Naive thymus-derived CD4-positive, alpha-beta T cell (primary cell): ENCODE measurements at regions of chr11 and their contacts with region 1.

Region 1: GRCh38 chr11:11866203-11866602 is 24.4 kb downstream of the USP47 start:
- DNase-seq: no peak
- ATAC-seq: no peak
- H3K4me3 ChIP-seq: no peak overlapping the region
- H3K4me3 Mint-ChIP-seq: peak overlapping the region in 6 of 10 donors; percentile 2 to 69 (median 32)
- H3K27ac ChIP-seq: no peak overlapping the region
- H3K27ac Mint-ChIP-seq: peak overlapping the region in 2 of 9 donors; percentile 11 to 12
- H3K4me1 ChIP-seq: peaks cover 23 to 30% of the 10 kb centered on the region in 2 donors
- H3K4me1 Mint-ChIP-seq: peaks cover 38 to 87% (median 77%) of the 10 kb centered on the region in 7 donors
- H3K27me3 ChIP-seq: no peaks in the 10 kb centered on the region
- H3K27me3 Mint-ChIP-seq: no peaks in the 10 kb centered on the region

Region 2: DNA sequence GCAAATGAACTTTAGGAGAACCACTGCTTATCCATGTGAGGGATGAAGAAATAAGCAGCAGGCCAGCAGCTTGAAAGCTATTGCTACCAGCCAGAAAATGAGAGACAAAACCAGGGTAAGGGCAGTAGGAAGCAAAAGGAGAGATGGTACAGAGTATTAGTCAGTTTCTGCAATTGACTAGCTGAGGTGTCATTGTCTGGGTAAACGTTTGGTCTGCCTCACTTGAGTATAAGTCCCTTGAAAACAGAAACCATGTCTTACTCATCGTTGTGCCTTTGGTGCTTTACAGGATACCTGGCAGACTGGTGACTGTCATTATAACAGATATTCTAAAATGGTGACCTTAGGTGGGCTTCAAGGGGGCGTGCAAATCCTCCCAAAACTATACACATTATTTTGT is 88.3 kb before region 1 on chr11:
- CTCF ChIA-PET with region 1: no interaction called
- POLR2A ChIA-PET with region 1: no interaction called
- intact Hi-C with region 1: no loop called
- DNase-seq: no peak
- ATAC-seq: no peak
- H3K4me3 ChIP-seq: no peak overlapping the region
- H3K4me3 Mint-ChIP-seq: no peak overlapping the region
- H3K27ac ChIP-seq: no peak overlapping the region
- H3K27ac Mint-ChIP-seq: no peak overlapping the region
- H3K4me1 ChIP-seq: no peaks in the 10 kb centered on the region
- H3K4me1 Mint-ChIP-seq: no peaks in the 10 kb centered on the region
- H3K27me3 ChIP-seq: no peaks in the 10 kb centered on the region
- H3K27me3 Mint-ChIP-seq: peaks cover 15 to 46% (median 24%) of the 10 kb centered on the region in 5 donors

Region 3: GRCh38 chr11:11848891-11849746 is 17.1 kb before region 1 on chr11:
- CTCF ChIA-PET with region 1: interaction called, 13 read pairs
- POLR2A ChIA-PET with region 1: interaction called, 3 read pairs
- intact Hi-C with region 1: loop called in 1 of 2 experiments (anchors 2 kb)
- DNase-seq: peak; percentile 24 to 76 (median 73)
- ATAC-seq: peak; percentile 98
- H3K4me3 ChIP-seq: peak overlapping the region; percentile 26
- H3K4me3 Mint-ChIP-seq: peak overlapping the region in 9 of 10 donors; percentile 47 to 79 (median 56)
- H3K27ac ChIP-seq: no peak overlapping the region
- H3K27ac Mint-ChIP-seq: peak overlapping the region in 8 of 9 donors; percentile 11 to 88 (median 72)
- H3K4me1 ChIP-seq: peaks cover 47 to 65% of the 10 kb centered on the region in 2 donors
- H3K4me1 Mint-ChIP-seq: peaks cover 53 to 75% (median 55%) of the 10 kb centered on the region in 7 donors
- H3K27me3 ChIP-seq: no peaks in the 10 kb centered on the region
- H3K27me3 Mint-ChIP-seq: no peaks in the 10 kb centered on the region

Region 4: DNA sequence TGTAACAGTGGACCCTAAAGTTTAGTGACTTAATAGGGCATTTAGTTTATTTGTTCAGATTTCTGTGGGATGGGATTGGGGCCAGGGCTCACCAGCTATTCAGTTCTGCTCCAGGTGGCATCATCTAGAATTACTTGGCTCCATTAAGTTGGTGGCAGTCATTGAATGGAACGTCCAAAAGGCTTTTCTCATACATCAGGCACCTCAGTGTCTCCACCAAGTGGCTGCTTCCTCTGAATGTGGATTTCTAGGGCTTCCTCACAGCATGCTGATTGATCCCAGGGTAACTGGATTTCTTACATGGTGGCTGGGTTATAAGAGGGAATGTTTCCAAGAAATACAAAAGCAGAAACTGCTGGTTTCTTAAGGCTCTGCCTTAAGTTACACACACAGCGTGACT is 10.3 kb after region 1 on chr11:
- CTCF ChIA-PET with region 1: interaction called, 5 read pairs
- POLR2A ChIA-PET with region 1: interaction called, 3 read pairs
- intact Hi-C with region 1: loop called in 1 of 2 experiments (anchors 1 kb)
- DNase-seq: no peak
- ATAC-seq: no peak
- H3K4me3 ChIP-seq: no peak overlapping the region
- H3K4me3 Mint-ChIP-seq: peak overlapping the region in 1 of 10 donors; percentile 4
- H3K27ac ChIP-seq: no peak overlapping the region
- H3K27ac Mint-ChIP-seq: peak overlapping the region in 1 of 9 donors; percentile 47
- H3K4me1 ChIP-seq: peaks cover 6 to 8% of the 10 kb centered on the region in 2 donors
- H3K4me1 Mint-ChIP-seq: peaks cover 25 to 91% (median 66%) of the 10 kb centered on the region in 7 donors
- H3K27me3 ChIP-seq: no peaks in the 10 kb centered on the region
- H3K27me3 Mint-ChIP-seq: no peaks in the 10 kb centered on the region

Region 5: GRCh38 chr11:11901917-11902316 is 35.7 kb after region 1 on chr11:
- CTCF ChIA-PET with region 1: no interaction called
- POLR2A ChIA-PET with region 1: no interaction called
- intact Hi-C with region 1: loop called in 1 of 2 experiments (anchors 5 kb)
- DNase-seq: no peak
- ATAC-seq: no peak
- H3K4me3 ChIP-seq: no peak overlapping the region
- H3K4me3 Mint-ChIP-seq: no peak overlapping the region
- H3K27ac ChIP-seq: no peak overlapping the region
- H3K27ac Mint-ChIP-seq: no peak overlapping the region
- H3K4me1 ChIP-seq: no peaks in the 10 kb centered on the region
- H3K4me1 Mint-ChIP-seq: peaks cover 0 to 11% (median 2%) of the 10 kb centered on the region in 7 donors
- H3K27me3 ChIP-seq: no peaks in the 10 kb centered on the region
- H3K27me3 Mint-ChIP-seq: no peaks in the 10 kb centered on the region

Region 6: DNA sequence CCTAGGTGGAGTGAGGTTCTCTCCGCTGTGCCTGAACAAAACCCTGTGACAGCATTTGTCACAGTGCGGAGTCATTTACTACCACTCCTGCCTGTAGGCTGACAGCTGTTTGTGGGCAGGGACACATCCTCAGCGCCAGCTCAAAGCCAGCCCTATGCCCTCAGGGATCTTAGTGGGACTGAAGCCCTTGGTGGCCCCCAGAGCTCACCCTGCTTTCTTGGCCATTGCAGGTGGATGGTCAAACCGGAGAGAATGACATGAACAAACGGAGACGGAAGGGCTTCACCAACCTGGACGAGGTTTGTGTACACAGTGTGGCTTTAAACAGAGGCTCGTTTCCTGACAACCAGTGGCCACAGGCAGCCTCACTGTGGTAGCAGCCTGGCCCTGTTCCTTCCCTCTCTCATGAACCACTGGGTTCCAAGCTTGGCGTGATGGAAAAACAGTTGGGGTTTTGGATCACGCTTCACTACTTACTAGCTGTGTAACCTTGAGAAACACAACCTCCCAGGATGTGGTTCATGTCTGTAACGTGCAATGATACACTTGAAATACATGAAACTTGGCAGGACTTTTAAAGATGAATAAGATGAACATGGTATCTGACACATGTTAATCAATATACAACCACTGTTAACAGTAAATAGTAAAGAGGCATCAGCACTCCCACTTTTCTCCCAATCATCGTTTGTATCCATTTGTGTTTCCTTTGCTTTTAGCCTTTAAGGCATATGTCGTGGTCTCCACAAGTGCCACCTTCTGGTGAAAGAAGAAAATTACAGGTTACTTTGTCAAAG is 369.9 kb after region 1 on chr11:
- CTCF ChIA-PET with region 1: no interaction called
- POLR2A ChIA-PET with region 1: no interaction called
- intact Hi-C with region 1: no loop called
- DNase-seq: peak in 8 of 9 donors; percentile 33 to 78 (median 72)
- ATAC-seq: peak; percentile 79
- H3K4me3 ChIP-seq: no peak overlapping the region
- H3K4me3 Mint-ChIP-seq: peak overlapping the region; percentile 17 to 81 (median 68)
- H3K27ac ChIP-seq: no peak overlapping the region
- H3K27ac Mint-ChIP-seq: peak overlapping the region; percentile 27 to 95 (median 77)
- H3K4me1 ChIP-seq: peaks cover 9 to 10% of the 10 kb centered on the region in 2 donors
- H3K4me1 Mint-ChIP-seq: peaks cover 18 to 41% (median 23%) of the 10 kb centered on the region in 7 donors
- H3K27me3 ChIP-seq: no peaks in the 10 kb centered on the region
- H3K27me3 Mint-ChIP-seq: no peaks in the 10 kb centered on the region

Region 7: GRCh38 chr11:12469451-12469850 is 603.2 kb after region 1 on chr11:
- CTCF ChIA-PET with region 1: no interaction called
- POLR2A ChIA-PET with region 1: no interaction called
- intact Hi-C with region 1: no loop called
- DNase-seq: no peak
- ATAC-seq: no peak
- H3K4me3 ChIP-seq: no peak overlapping the region
- H3K4me3 Mint-ChIP-seq: no peak overlapping the region
- H3K27ac ChIP-seq: no peak overlapping the region
- H3K27ac Mint-ChIP-seq: no peak overlapping the region
- H3K4me1 ChIP-seq: no peaks in the 10 kb centered on the region
- H3K4me1 Mint-ChIP-seq: no peaks in the 10 kb centered on the region
- H3K27me3 ChIP-seq: no peaks in the 10 kb centered on the region
- H3K27me3 Mint-ChIP-seq: peaks cover 0 to 20% (median 6%) of the 10 kb centered on the region in 5 donors

Region 8: GRCh38 chr11:12693479-12694181 is 827.4 kb after region 1 on chr11:
- CTCF ChIA-PET with region 1: no interaction called
- POLR2A ChIA-PET with region 1: no interaction called
- intact Hi-C with region 1: no loop called
- DNase-seq: no peak
- ATAC-seq: peak; percentile 34
- H3K4me3 ChIP-seq: no peak overlapping the region
- H3K4me3 Mint-ChIP-seq: peak overlapping the region in 2 of 10 donors; percentile 24 to 33
- H3K27ac ChIP-seq: no peak overlapping the region
- H3K27ac Mint-ChIP-seq: no peak overlapping the region
- H3K4me1 ChIP-seq: peaks cover 0 to 5% of the 10 kb centered on the region in 2 donors
- H3K4me1 Mint-ChIP-seq: peaks cover 6 to 21% (median 11%) of the 10 kb centered on the region in 7 donors
- H3K27me3 ChIP-seq: peaks cover 0 to 6% of the 10 kb centered on the region in 2 donors
- H3K27me3 Mint-ChIP-seq: peaks cover 70 to 83% (median 78%) of the 10 kb centered on the region in 5 donors